Mammary epithelial cell (primary cell): ENCODE measurements at regions of chr3 and their contacts with region 1.

Region 1: GRCh38 chr3:14345308-14346150 is 56.9 kb upstream of the SLC6A6 start:
- DNase-seq: peak; percentile 31
- H3K4me3 ChIP-seq: no peak overlapping the region
- H3K27ac ChIP-seq: no peak overlapping the region
- H3K4me1 ChIP-seq: no peaks in the 10 kb centered on the region
- H3K27me3 ChIP-seq: peaks cover 2% of the 10 kb centered on the region
- CTCF ChIP-seq: no peak

Region 2: GRCh38 chr3:14289590-14290461 is 55.7 kb before region 1 on chr3:
- CTCF ChIA-PET with region 1: no interaction called
- dilution Hi-C with region 1: loop called (anchors 5 kb)
- in situ Hi-C with region 1: no loop called
- intact Hi-C with region 1: no loop called
- DNase-seq: peak; percentile 38
- H3K4me3 ChIP-seq: no peak overlapping the region
- H3K27ac ChIP-seq: no peak overlapping the region
- H3K4me1 ChIP-seq: no peaks in the 10 kb centered on the region
- H3K27me3 ChIP-seq: no peaks in the 10 kb centered on the region
- CTCF ChIP-seq: no peak

Region 3: DNA sequence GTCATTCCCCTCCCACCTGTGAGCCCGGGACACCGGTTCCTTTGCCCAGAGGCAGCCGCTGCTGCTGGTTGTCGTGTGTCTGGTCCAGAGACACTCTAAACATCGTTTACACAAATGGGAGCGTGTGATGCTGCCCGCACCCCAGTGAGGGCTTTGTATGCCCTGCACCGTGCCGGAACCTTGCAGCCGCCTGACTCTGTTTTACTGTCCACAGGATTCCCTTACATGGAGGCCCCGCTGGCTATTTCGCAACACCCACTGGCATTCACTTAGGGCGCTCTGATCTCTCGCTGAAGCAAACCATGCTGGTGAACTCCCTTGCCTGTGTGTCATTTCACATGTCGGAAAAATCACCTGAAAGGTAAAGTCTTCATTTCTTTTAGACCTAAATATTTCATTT is 44.0 kb before region 1 on chr3:
- CTCF ChIA-PET with region 1: no interaction called
- dilution Hi-C with region 1: no loop called
- in situ Hi-C with region 1: no loop called
- intact Hi-C with region 1: no loop called
- DNase-seq: peak; percentile 65
- H3K4me3 ChIP-seq: no peak overlapping the region
- H3K27ac ChIP-seq: no peak overlapping the region
- H3K4me1 ChIP-seq: peaks cover 20% of the 10 kb centered on the region
- H3K27me3 ChIP-seq: no peaks in the 10 kb centered on the region
- CTCF ChIP-seq: no peak

Region 4: DNA sequence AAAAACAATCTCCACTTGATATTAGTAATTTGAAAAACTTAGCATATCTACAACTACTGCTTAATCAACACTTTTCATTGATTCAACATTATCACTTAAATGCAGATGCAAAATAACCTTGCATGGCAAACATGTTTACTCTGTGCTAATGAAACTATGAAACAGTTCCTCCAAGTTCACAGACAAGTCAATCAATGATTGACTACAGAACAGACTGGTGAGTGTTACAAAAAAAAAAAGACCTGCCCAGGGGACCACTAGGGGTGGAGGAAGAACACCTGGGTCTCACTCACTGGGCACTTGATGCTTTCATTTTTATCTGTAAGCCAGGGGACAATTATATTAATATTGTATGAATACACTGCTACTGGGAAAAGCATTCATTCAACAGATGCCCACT is 597.5 kb after region 1 on chr3:
- CTCF ChIA-PET with region 1: no interaction called
- dilution Hi-C with region 1: no loop called
- in situ Hi-C with region 1: no loop called
- intact Hi-C with region 1: no loop called
- DNase-seq: no peak
- H3K4me3 ChIP-seq: no peak overlapping the region
- H3K27ac ChIP-seq: no peak overlapping the region
- H3K4me1 ChIP-seq: peaks cover 7% of the 10 kb centered on the region
- H3K27me3 ChIP-seq: no peaks in the 10 kb centered on the region
- CTCF ChIP-seq: no peak